Dorsolateral prefrontal cortex (tissue), 120 donors: ENCODE measurements at regions of chr2 and their contacts with region 1.

Region 1: DNA sequence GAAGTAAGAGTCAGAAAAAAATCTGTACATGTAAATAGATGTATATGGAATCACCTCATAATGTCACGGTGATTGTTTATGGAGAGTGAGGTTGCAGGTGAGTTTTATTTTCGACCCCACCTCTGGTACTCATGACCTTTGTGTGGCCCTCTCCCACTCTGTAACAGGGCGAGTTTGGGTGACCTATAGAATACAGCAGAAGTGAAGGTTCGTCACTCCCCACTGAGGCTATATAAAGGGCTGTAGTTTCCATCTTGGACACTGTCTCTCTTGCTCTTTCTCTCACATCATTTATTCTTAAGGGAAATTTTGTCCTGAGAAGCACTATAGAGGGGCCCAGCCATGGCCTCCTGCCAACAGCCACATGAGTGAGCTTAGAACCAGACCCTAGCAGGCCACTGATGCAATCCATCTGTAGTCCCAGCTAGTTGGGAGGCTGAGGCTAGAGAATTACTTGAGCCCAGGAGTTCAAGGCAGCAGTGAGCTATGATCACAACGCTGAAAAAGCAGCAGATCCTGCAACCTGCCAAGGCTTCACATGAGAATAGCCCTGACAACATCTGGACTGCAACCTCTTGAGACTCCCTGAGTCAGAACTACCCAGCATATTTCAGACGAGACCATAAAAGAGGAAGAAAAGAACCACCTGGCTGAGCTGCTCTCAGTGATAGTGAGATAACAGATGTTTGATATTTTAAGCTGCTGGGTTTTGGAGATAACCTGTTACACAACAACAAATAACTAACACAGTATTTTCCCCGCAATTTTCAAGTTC is 74.3 kb upstream of the SLC1A4 start:
- DNase-seq: no peak
- H3K4me3 ChIP-seq: no peak overlapping the region
- H3K27ac ChIP-seq: no peak overlapping the region
- H3K27me3 ChIP-seq: no peaks in the 10 kb centered on the region
- CTCF ChIP-seq: no peak

Region 2: DNA sequence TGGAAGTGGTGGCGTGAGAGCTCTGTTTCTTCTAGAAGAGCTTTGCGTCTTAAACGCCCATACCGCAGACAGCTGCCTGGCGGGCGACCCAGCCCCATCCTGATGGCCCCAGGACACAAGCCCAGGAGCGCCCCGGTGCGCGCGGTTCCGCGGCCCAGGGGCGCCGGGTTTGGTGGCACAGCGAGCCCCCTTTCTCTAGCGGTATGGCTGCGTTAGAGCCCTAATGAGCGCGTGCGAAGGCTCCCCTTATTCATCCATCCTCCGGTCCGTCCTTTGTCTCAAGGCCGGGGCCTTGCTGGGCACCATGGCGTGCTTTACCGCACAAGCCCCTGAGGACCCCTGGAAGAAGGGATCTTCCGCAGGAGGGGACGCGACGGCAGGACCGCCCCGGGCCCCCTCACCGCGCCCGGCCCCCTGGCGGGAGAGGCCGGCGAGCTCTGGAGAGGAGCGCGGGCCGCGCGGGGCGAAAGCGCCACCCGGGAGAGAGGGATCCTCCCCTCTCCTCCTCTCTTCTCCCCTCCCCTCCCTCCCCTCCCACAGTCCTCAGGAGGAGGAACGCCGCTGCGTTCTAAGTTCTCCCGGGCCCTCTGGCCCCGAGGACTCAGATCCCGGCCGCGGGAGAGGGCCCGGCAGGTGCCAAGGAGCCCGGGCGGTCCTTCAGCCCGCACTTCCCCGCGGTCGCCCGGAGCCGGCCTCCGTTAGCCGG is 73.7 kb after region 1 on chr2:
- intact Hi-C with region 1: loop called (anchors 1 to 5 kb)
- DNase-seq: peak; percentile 27 to 69 (median 55)
- H3K4me3 ChIP-seq: peak overlapping the region; percentile 69 to 97 (median 88)
- H3K27ac ChIP-seq: peak overlapping the region; percentile 21 to 98 (median 95)
- H3K27me3 ChIP-seq: no peaks in the 10 kb centered on the region
- CTCF ChIP-seq: peak in 50 of 56 donors; percentile 17 to 67 (median 43)

Region 3: GRCh38 chr2:65040400-65041261 is 125.7 kb after region 1 on chr2:
- intact Hi-C with region 1: loop called (anchors 1 to 2 kb)
- DNase-seq: peak; percentile 74 to 92 (median 88)
- H3K4me3 ChIP-seq: peak overlapping the region in 38 of 59 donors; percentile 5 to 47 (median 27)
- H3K27ac ChIP-seq: peak overlapping the region in 3 of 59 donors; percentile 6 to 31 (median 19)
- H3K27me3 ChIP-seq: no peaks in the 10 kb centered on the region
- CTCF ChIP-seq: peak; percentile 85 to 99 (median 98)

Region 4: GRCh38 chr2:65129826-65130663 is 215.1 kb after region 1 on chr2 and contains the start of gene RAB1A:
- intact Hi-C with region 1: loop called in 1 of 2 experiments (anchors 10 kb)
- DNase-seq: peak; percentile 98 to 100 (median 99)
- H3K4me3 ChIP-seq: peak within 1 kb of the TSS; percentile 60 to 98 (median 86)
- H3K27ac ChIP-seq: peak within 1 kb of the TSS; percentile 81 to 98 (median 93)
- H3K27me3 ChIP-seq: no peaks in the 10 kb centered on the region
- CTCF ChIP-seq: peak in 53 of 56 donors; percentile 4 to 79 (median 60)
- total RNA-seq, gene RAB1A: 87.4 to 171 (median 127) TPM

Region 5: GRCh38 chr2:65142515-65142914 is 227.6 kb after region 1 on chr2:
- intact Hi-C with region 1: loop called (anchors 10 kb)
- DNase-seq: peak in 2 of 10 donors; percentile 58 to 65
- H3K4me3 ChIP-seq: peak overlapping the region in 4 of 59 donors; percentile 3 to 37 (median 18)
- H3K27ac ChIP-seq: peak overlapping the region in 37 of 59 donors; percentile 1 to 84 (median 54)
- H3K27me3 ChIP-seq: no peaks in the 10 kb centered on the region
- CTCF ChIP-seq: peak in 52 of 56 donors; percentile 10 to 78 (median 48)

Region 6: GRCh38 chr2:65186872-65187851 is 272.2 kb after region 1 on chr2:
- intact Hi-C with region 1: loop called in 1 of 2 experiments (anchors 5 kb)
- DNase-seq: peak; percentile 59 to 84 (median 80)
- H3K4me3 ChIP-seq: peak overlapping the region in 16 of 59 donors; percentile 1 to 36 (median 14)
- H3K27ac ChIP-seq: peak overlapping the region in 7 of 59 donors; percentile 3 to 67 (median 46)
- H3K27me3 ChIP-seq: no peaks in the 10 kb centered on the region
- CTCF ChIP-seq: peak; percentile 49 to 93 (median 82)

Region 7: DNA sequence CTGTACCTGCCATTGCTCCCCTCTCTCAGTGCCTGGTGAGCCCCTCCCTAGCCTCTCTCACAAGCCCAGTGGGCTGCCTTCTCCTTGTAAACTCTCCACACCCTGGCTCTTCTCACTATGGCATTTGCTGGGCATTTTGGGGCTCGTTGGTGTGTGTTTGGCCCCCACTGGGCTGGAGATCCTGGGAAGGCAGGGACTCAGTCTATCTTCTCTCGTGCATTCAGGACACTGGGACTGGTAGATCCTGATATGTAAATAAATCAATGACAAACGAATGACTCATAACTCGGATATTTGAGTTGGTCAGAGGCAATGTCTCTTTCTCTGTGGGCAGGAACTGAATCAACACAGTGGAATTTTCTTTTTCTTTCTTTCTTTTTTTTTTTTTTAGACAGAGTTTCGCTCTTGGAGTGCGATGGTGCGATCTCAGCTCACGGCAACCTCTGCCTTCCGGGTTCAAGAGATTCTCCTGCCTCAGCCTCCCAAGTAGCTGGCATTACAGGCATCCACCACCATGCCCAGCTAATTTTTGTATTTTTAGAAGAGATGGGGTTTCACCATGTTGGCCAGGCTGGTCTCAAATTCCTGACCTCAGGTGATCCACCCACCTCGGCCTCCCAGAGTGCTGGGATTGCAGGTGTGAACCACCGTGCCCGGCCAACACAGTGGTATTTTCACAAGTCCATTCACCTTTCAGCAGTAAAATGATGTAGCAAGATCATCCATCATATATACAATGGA is 662.1 kb after region 1 on chr2:
- intact Hi-C with region 1: loop called in 1 of 2 experiments (anchors 5 kb)
- DNase-seq: no peak
- H3K4me3 ChIP-seq: no peak overlapping the region
- H3K27ac ChIP-seq: no peak overlapping the region
- H3K27me3 ChIP-seq: no peaks in the 10 kb centered on the region
- CTCF ChIP-seq: no peak